Heart left ventricle (tissue), 16 donors: ENCODE measurements at regions of chr18 and their contacts with region 1.

Region 1: GRCh38 chr18:49510393-49511115 is 23.5 kb upstream of the C18orf32 start:
- DNase-seq: peak in 4 of 5 donors; percentile 31 to 64 (median 42)
- ATAC-seq: peak in 3 of 4 donors; percentile 52 to 72 (median 66)
- H3K4me3 ChIP-seq: no peak overlapping the region
- H3K27ac ChIP-seq: no peak overlapping the region
- H3K4me1 ChIP-seq: no peaks in the 10 kb centered on the region
- H3K27me3 ChIP-seq: peaks cover 0 to 6% (median 0%) of the 10 kb centered on the region in 9 donors
- CTCF ChIP-seq: peak; percentile 71 to 87 (median 81)
- POLR2A ChIP-seq: no peak

Region 2: GRCh38 chr18:49531678-49532153 is 21.2 kb after region 1 on chr18:
- intact Hi-C with region 1: no loop called
- DNase-seq: no peak
- ATAC-seq: no peak
- H3K4me3 ChIP-seq: no peak overlapping the region
- H3K27ac ChIP-seq: no peak overlapping the region
- H3K4me1 ChIP-seq: no peaks in the 10 kb centered on the region
- H3K27me3 ChIP-seq: peaks cover 0 to 6% (median 0%) of the 10 kb centered on the region in 9 donors
- CTCF ChIP-seq: no peak
- POLR2A ChIP-seq: no peak

Region 3: GRCh38 chr18:49645841-49646351 is 135.3 kb after region 1 on chr18:
- intact Hi-C with region 1: no loop called
- DNase-seq: peak in 4 of 5 donors; percentile 68 to 81 (median 76)
- ATAC-seq: peak; percentile 74 to 85 (median 83)
- H3K4me3 ChIP-seq: no peak overlapping the region
- H3K27ac ChIP-seq: peak overlapping the region in 7 of 12 donors; percentile 7 to 51 (median 25)
- H3K4me1 ChIP-seq: peaks cover 0 to 21% (median 2%) of the 10 kb centered on the region in 12 donors
- H3K27me3 ChIP-seq: no peaks in the 10 kb centered on the region
- CTCF ChIP-seq: no peak
- POLR2A ChIP-seq: no peak

Region 4: GRCh38 chr18:49768051-49768391 is 257.5 kb after region 1 on chr18:
- intact Hi-C with region 1: loop called in 2 of 10 experiments (anchors 5 to 10 kb)
- DNase-seq: peak in 2 of 5 donors; percentile 30 to 50
- ATAC-seq: peak; percentile 51 to 74 (median 64)
- H3K4me3 ChIP-seq: no peak overlapping the region
- H3K27ac ChIP-seq: no peak overlapping the region
- H3K4me1 ChIP-seq: no peaks in the 10 kb centered on the region
- H3K27me3 ChIP-seq: no peaks in the 10 kb centered on the region
- CTCF ChIP-seq: peak; percentile 20 to 60 (median 45)
- POLR2A ChIP-seq: no peak

Region 5: DNA sequence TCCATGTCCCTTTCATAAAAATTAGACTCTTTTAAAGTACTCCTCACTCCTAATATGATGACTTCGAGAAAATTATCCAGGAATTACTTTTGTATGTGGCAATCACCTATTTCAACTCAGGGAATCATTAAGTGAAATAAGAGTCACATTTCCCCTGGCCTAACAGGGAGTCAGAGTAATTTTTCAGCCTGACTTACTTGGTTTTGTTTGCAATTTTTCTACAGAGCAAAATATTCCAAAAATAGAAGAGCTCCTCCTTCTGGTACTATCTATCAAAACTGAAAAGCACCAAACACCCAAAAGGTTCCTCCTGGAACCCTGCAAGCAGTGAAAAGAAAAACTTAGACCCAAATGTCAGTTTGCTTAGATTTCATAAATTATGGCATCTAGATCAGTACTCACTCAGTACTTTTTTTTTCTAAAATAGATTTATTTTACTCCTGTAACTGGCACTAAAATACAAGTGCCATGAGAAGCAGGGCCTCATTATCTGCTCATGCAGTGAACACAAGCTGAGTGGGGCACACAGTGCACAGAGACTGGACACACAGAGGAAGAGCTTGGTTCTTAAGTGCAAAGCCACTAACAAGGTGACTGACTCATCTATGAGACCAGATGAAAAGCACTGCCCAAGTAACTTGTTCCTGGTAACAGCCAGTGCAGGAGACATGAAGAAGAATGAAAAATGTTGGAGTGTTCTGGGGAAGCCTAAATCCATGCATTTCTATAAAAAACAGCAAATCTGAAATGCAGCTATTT is 274.1 kb after region 1 on chr18:
- intact Hi-C with region 1: loop called in 2 of 10 experiments (anchors 10 kb)
- DNase-seq: no peak
- ATAC-seq: peak in 2 of 4 donors; percentile 28 to 36
- H3K4me3 ChIP-seq: no peak overlapping the region
- H3K27ac ChIP-seq: peak overlapping the region in 2 of 12 donors; percentile 35 to 44
- H3K4me1 ChIP-seq: peaks cover 0 to 10% (median 0%) of the 10 kb centered on the region in 12 donors
- H3K27me3 ChIP-seq: no peaks in the 10 kb centered on the region
- CTCF ChIP-seq: peak in 6 of 12 donors; percentile 12 to 39 (median 26)
- POLR2A ChIP-seq: no peak

Region 6: DNA sequence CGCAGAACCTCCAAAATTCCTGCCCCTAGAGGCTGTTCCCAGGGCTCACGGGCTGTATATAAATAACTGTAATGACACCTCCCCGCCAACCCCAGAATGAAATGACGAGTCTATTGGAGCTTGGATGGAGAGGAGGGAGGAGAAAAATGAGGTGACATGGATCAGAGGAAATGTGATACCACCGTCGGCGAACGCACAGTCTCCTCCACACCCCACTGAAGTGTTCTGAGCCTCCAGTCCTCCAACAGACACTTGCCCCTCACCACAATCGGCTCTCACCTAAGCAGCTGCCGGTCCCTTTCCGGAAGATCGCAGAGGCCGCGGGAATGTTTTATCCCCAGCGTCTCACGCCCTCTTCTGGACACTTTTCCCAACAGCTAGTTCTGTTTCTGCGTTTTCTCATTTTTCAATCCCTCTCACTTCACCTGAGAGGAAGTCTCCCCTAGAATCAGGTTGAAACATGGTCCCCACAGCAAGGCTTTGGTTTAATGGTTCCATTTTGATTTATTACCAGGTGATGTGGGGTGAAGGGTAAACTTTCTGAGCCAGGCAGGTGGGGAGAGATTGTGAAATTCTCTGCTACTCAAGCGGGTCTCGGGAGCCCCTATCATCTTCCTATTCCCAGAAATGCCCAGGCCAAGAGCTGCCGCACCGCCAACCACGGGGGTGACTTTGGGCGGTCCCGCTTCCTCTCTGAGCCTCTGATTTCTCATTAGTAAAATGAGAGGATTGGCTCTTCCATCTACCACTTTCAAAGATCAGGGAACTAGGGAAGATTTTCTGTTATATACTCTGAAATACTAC is 693.4 kb after region 1 on chr18:
- intact Hi-C with region 1: loop called in 3 of 10 experiments (anchors 5 kb)
- DNase-seq: peak in 1 of 5 donors; percentile 62
- ATAC-seq: peak in 3 of 4 donors; percentile 37 to 71 (median 41)
- H3K4me3 ChIP-seq: peak overlapping the region in 2 of 12 donors; percentile 13 to 19
- H3K27ac ChIP-seq: no peak overlapping the region
- H3K4me1 ChIP-seq: peaks cover 0 to 6% (median 0%) of the 10 kb centered on the region in 12 donors
- H3K27me3 ChIP-seq: peaks cover 0 to 25% (median 3%) of the 10 kb centered on the region in 9 donors
- CTCF ChIP-seq: peak; percentile 30 to 64 (median 52)
- POLR2A ChIP-seq: no peak

Region 7: DNA sequence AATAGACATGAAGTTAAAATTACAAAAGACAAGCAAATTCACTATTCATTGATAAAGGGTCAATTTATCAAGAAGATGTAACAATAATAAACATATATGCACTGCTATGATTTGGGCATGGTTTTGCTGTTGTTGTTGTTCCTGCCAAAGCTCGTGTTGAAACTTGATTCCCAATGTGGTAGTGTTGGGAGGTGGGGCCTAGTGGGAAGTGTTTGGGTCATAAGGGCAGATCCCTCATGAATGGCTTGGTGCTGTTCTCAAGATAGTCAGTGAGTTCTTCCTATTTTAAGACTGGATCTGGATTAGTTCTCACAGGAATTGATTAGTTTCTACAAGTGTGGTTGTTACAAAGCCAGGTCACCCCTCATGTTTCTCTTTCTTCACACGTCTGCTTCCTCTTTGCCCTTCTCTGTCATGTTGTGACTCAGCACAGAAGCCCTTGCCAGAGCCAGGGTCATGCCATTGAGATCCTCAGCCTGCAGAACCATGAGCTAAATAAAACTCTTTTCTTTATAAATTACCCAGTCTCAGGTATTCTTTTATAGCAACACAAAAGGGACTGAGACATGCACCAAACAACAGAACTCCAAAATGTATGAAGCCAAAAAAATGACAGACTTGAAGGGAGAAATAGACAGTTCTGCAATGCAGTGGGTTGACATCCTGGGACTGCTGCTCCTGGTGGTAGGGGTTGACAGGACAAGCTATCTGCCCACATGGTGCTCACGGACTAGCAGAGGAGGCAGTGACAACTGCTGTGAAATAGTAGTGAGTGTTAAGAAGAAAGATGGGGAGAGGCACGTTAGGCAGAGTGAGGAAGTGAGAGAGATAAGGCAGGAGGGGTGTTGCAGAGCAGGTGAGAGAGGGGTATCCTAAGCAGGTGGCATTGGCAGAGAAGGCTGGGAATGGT is 845.7 kb after region 1 on chr18:
- intact Hi-C with region 1: loop called in 2 of 10 experiments (anchors 10 kb)
- DNase-seq: no peak
- ATAC-seq: peak in 3 of 4 donors; percentile 20 to 61 (median 49)
- H3K4me3 ChIP-seq: no peak overlapping the region
- H3K27ac ChIP-seq: peak overlapping the region in 1 of 12 donors; percentile 18
- H3K4me1 ChIP-seq: peaks cover 0 to 8% (median 0%) of the 10 kb centered on the region in 12 donors
- H3K27me3 ChIP-seq: peaks cover 0 to 13% (median 0%) of the 10 kb centered on the region in 9 donors
- CTCF ChIP-seq: peak in 1 of 12 donors; percentile 11
- POLR2A ChIP-seq: no peak